ENCODE measurements at regions of chr17 and their contacts with region 1.

Region 1: GRCh38 chr17:79082311-79083190 is 7.9 kb downstream of the ENGASE start:
- DNase-seq: peak in 1 of 2 donors; percentile 88
- ATAC-seq: no peak
- H3K4me3 ChIP-seq: no peak overlapping the region
- H3K27ac ChIP-seq: no peak overlapping the region
- H3K4me1 ChIP-seq: no peaks in the 10 kb centered on the region
- H3K27me3 ChIP-seq: no peaks in the 10 kb centered on the region

Region 2: GRCh38 chr17:79045842-79046196 is 36.7 kb before region 1 on chr17:
- intact Hi-C with region 1: loop called (anchors 2 kb)
- DNase-seq: peak; percentile 80 to 92
- ATAC-seq: peak; percentile 87
- H3K4me3 ChIP-seq: no peak overlapping the region
- H3K27ac ChIP-seq: no peak overlapping the region
- H3K4me1 ChIP-seq: no peaks in the 10 kb centered on the region
- H3K27me3 ChIP-seq: no peaks in the 10 kb centered on the region

Region 3: GRCh38 chr17:79066963-79067362 is 15.6 kb before region 1 on chr17:
- intact Hi-C with region 1: loop called in 1 of 2 experiments (anchors 2 kb)
- DNase-seq: peak; percentile 27 to 33
- ATAC-seq: no peak
- H3K4me3 ChIP-seq: no peak overlapping the region
- H3K27ac ChIP-seq: no peak overlapping the region
- H3K4me1 ChIP-seq: no peaks in the 10 kb centered on the region
- H3K27me3 ChIP-seq: no peaks in the 10 kb centered on the region

Measured in aorta (tissue), 5 donors.